Left ventricle myocardium superior (tissue), 1 donor: ENCODE measurements at regions of chr2 and their contacts with region 1.

Region 1: DNA sequence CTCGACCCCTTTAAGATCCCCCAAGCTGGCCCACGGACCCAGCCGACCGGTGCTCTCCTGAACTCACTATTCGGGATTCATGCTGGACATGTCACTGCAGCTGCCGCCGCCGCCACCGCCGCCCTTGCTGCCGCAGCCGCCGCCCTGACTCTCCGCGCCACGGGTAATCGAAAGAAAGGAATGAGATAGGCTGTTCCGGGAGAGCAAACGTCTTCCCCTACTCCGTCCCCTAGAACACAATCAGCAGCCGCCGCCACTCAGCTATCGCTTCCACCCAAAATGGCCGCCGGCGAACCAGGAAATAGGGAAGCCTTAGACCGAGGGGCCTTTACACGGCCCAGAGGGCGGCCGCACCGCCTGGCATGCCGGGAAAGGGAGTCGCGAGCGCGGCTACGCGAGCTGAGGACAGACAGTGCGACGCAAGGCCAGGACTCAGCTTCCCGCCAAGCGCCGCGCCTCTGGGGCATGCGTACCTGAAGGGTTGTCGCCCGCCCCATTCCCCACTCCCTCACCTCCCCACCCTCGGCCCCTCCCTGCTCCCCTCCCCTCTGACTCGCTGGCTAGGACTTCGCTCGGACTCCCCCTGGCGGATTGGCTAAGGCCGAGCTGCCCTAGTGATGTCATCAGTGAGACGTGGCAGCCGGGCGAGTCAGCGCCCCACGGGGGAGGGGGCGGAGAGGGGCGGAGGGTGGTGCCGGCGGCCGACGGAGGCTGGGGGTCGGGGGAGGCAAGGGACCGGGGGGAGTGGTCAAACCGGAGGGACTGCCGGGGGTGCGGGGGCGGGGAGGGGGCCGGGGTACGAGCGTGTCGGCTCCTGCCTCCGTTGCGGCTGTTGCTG is at the start of gene RAB1A:
- DNase-seq: peak; percentile 100
- ATAC-seq: peak; percentile 96
- total RNA-seq, gene RAB1A: 121 TPM

Region 2: GRCh38 chr2:65070172-65070830 is 59.7 kb before region 1 on chr2:
- intact Hi-C with region 1: loop called (anchors 5 kb)
- DNase-seq: no peak
- ATAC-seq: peak; percentile 48

Region 3: GRCh38 chr2:65357095-65357958 is 227.3 kb after region 1 on chr2:
- intact Hi-C with region 1: no loop called
- DNase-seq: no peak
- ATAC-seq: no peak